HepG2 (cell line): ENCODE measurements at regions of chr9 and their contacts with region 1.

Region 1: DNA sequence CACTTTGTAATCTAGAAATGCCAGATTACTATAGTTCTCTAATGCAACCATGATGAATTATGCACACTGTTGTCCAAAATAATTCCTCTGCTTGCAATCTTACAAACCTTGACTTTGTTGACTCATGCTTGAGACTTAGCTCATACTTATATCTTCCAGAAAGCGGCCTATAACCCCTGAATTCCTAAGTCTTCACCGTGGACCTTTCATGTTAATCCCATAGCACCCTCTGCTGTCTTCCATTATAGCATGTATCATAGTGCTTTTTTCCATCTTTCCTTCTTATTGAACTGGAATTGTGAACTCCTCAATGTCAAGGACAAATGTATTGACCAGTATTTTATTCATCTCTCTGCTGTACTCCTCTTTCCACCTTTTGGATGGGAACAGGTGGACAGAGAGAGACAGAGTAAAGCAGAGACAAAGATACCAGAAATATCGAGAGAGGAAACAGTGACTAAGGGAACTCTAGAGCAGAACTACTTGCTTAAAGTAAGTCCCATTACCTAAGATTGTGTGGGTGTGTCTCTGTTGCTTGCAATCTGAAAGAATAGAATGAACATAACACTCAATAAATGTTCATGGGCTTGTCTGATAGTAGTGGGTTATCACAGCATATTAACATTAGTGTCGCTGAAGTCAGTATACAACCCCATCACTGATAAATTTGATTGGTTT is 110.1 kb downstream of the LURAP1L start:
- DNase-seq: peak; percentile 36
- ATAC-seq: peak; percentile 77
- H3K4me3 ChIP-seq: no peak overlapping the region
- H3K27ac ChIP-seq: no peak overlapping the region
- H3K4me1 ChIP-seq: no peaks in the 10 kb centered on the region
- H3K27me3 ChIP-seq: no peaks in the 10 kb centered on the region
- CTCF ChIP-seq: peak; percentile 73
- EP300 ChIP-seq: no peak
- POLR2A ChIP-seq: no peak
- RAD21 ChIP-seq: peak; percentile 67

Region 2: GRCh38 chr9:11431490-11431889 is 1453.4 kb before region 1 on chr9:
- CTCF ChIA-PET with region 1: no interaction called
- POLR2A ChIA-PET with region 1: no interaction called
- in situ Hi-C with region 1: no loop called
- intact Hi-C with region 1: no loop called
- DNase-seq: no peak
- ATAC-seq: no peak
- H3K4me3 ChIP-seq: no peak overlapping the region
- H3K27ac ChIP-seq: no peak overlapping the region
- H3K4me1 ChIP-seq: no peaks in the 10 kb centered on the region
- H3K27me3 ChIP-seq: no peaks in the 10 kb centered on the region
- CTCF ChIP-seq: no peak
- EP300 ChIP-seq: no peak
- POLR2A ChIP-seq: no peak
- RAD21 ChIP-seq: no peak

Region 3: GRCh38 chr9:12224449-12224848 is 660.4 kb before region 1 on chr9:
- CTCF ChIA-PET with region 1: no interaction called
- POLR2A ChIA-PET with region 1: no interaction called
- in situ Hi-C with region 1: no loop called
- intact Hi-C with region 1: no loop called
- DNase-seq: no peak
- ATAC-seq: no peak
- H3K4me3 ChIP-seq: no peak overlapping the region
- H3K27ac ChIP-seq: no peak overlapping the region
- H3K4me1 ChIP-seq: no peaks in the 10 kb centered on the region
- H3K27me3 ChIP-seq: no peaks in the 10 kb centered on the region
- CTCF ChIP-seq: no peak
- EP300 ChIP-seq: no peak
- POLR2A ChIP-seq: no peak
- RAD21 ChIP-seq: no peak

Region 4: DNA sequence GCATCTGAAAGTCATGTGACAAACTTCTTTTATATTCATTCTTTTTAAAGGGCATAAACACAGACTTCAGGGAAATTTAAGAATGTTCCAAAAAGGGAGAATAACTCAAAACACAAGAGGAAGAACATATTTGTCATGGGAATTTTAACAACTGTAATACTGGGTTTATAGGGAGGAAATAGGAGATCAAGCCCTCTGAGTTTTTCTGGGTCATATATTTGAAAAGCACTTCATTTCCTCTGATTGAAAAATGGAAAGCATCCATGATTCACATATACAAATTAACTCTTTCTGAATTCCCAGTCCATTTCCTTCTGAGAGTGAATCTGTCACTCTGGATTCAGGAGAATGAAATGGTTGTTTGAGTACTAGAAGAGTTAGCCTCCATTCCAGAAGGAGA is 83.2 kb before region 1 on chr9:
- CTCF ChIA-PET with region 1: no interaction called
- POLR2A ChIA-PET with region 1: no interaction called
- in situ Hi-C with region 1: no loop called
- intact Hi-C with region 1: no loop called
- DNase-seq: no peak
- ATAC-seq: no peak
- H3K4me3 ChIP-seq: no peak overlapping the region
- H3K27ac ChIP-seq: no peak overlapping the region
- H3K4me1 ChIP-seq: no peaks in the 10 kb centered on the region
- H3K27me3 ChIP-seq: no peaks in the 10 kb centered on the region
- CTCF ChIP-seq: no peak
- EP300 ChIP-seq: no peak
- POLR2A ChIP-seq: no peak
- RAD21 ChIP-seq: no peak

Region 5: DNA sequence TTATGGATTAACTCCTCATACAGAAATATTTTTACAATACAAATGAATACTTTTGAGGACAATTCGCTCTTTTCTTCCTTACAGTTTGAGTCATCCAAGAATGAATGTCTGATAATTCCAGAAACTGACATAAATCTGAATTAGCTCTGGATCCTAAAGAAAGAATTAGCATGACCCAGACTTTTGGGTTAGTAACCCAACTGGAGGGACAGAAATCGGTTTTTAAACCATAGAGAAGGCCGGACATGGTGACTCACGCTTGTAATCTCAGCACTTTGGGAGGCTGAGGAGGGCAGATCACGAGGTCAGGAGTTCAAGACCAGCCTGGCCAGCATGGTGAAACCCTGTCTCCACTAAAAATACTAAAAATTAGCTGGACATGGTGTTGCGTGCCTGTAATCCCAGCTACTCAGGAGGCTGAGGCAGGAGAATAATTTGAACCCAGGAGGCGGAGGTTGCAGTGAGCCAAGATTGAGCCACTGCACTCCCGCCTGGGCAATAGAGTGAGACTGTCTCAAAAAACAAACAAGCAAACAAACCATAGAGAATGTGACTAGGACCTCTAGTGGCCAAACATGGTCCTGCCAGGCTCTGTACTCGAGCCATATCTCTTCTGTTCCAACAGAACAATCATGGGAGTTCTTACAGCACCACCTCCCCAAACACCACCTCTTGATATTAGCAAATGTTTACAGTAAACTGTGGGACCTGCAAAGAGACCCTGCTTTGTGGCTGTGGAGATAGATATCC is 65.3 kb before region 1 on chr9:
- CTCF ChIA-PET with region 1: no interaction called
- POLR2A ChIA-PET with region 1: no interaction called
- in situ Hi-C with region 1: no loop called
- intact Hi-C with region 1: loop called (anchors 5 kb)
- DNase-seq: peak; percentile 53
- ATAC-seq: peak; percentile 66
- H3K4me3 ChIP-seq: no peak overlapping the region
- H3K27ac ChIP-seq: no peak overlapping the region
- H3K4me1 ChIP-seq: peaks cover 52% of the 10 kb centered on the region
- H3K27me3 ChIP-seq: no peaks in the 10 kb centered on the region
- CTCF ChIP-seq: peak; percentile 76
- EP300 ChIP-seq: no peak
- POLR2A ChIP-seq: no peak
- RAD21 ChIP-seq: peak; percentile 73

Region 6: DNA sequence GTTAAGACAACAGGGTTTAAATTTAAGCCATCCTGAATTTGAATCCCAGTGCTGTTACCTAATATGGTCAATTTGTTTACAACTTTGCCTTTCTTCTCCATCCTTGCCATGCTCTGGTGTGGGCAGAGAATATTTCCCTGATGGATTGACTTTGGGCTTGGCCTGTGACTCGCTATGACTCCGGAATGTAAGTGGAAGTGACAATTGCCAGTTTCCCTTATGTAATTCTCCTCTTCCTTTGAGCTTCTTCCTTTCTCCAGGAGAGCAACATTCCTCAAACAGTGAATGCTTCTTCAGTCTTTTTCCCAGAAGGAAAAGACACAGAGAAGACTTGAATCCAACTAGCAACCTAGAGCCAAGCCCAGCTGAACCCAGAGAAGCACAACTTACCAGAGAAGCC is 49.1 kb after region 1 on chr9:
- CTCF ChIA-PET with region 1: no interaction called
- POLR2A ChIA-PET with region 1: no interaction called
- in situ Hi-C with region 1: no loop called
- intact Hi-C with region 1: no loop called
- DNase-seq: no peak
- ATAC-seq: no peak
- H3K4me3 ChIP-seq: no peak overlapping the region
- H3K27ac ChIP-seq: no peak overlapping the region
- H3K4me1 ChIP-seq: no peaks in the 10 kb centered on the region
- H3K27me3 ChIP-seq: no peaks in the 10 kb centered on the region
- CTCF ChIP-seq: no peak
- EP300 ChIP-seq: no peak
- POLR2A ChIP-seq: no peak
- RAD21 ChIP-seq: no peak